BJ (cell line): ENCODE measurements at regions of chr7 and their contacts with region 1.

Region 1: GRCh38 chr7:128343554-128344430 is at the start of gene RBM28:
- DNase-seq: peak; percentile 44
- H3K4me3 ChIP-seq: peak within 1 kb of the TSS; percentile 94
- H3K27me3 ChIP-seq: peaks cover 8% of the 10 kb centered on the region
- CTCF ChIP-seq: no peak
- polyA plus RNA-seq, gene RBM28: 14.8 and 16.1 TPM in 2 replicates

Region 2: DNA sequence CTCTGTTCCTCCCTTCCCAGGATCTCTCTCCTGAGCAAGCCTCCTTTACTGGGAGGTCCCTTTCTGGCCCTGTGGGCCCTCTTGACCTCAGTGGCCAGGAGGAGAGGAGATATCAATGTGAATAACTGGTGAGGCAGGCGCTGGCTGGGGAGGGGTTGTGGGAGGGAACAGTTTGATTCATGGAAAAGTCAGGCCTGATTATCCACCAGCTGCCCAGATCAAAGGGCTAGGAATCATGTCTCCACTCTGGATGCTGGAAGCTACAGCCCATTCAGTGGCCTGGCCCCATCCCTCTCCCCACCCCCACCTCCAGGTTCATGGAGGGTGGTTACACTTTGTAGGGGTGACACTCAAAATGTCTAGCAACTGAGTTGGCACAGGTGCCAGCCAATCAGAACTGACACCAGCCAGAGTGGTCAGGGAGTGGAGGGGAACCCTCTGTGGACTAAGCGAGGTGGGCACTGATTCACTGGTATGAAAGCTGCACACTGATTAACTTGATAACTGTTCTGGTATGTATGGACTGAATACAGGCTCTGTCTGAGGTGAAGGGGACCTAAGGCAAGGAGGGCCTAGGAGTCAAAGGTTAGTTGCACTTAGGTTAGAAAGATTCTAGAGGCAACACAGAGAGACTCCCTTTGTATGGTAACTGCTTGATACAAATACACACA is 12.9 kb after region 1 on chr7:
- CTCF ChIA-PET with region 1: interaction called, 35 read pairs
- POLR2A ChIA-PET with region 1: no interaction called
- DNase-seq: no peak
- H3K4me3 ChIP-seq: no peak overlapping the region
- H3K27me3 ChIP-seq: peaks cover 47% of the 10 kb centered on the region
- CTCF ChIP-seq: no peak

Region 3: GRCh38 chr7:128373606-128374005 is 29.8 kb after region 1 on chr7:
- CTCF ChIA-PET with region 1: interaction called, 422 read pairs
- POLR2A ChIA-PET with region 1: no interaction called
- DNase-seq: no peak
- H3K4me3 ChIP-seq: no peak overlapping the region
- H3K27me3 ChIP-seq: peaks cover 3% of the 10 kb centered on the region
- CTCF ChIP-seq: no peak

Region 4: GRCh38 chr7:128398016-128398840 is 54.4 kb after region 1 on chr7:
- CTCF ChIA-PET with region 1: interaction called, 422 read pairs
- POLR2A ChIA-PET with region 1: no interaction called
- DNase-seq: no peak
- H3K4me3 ChIP-seq: no peak overlapping the region
- H3K27me3 ChIP-seq: no peaks in the 10 kb centered on the region
- CTCF ChIP-seq: peak; percentile 94

Region 5: DNA sequence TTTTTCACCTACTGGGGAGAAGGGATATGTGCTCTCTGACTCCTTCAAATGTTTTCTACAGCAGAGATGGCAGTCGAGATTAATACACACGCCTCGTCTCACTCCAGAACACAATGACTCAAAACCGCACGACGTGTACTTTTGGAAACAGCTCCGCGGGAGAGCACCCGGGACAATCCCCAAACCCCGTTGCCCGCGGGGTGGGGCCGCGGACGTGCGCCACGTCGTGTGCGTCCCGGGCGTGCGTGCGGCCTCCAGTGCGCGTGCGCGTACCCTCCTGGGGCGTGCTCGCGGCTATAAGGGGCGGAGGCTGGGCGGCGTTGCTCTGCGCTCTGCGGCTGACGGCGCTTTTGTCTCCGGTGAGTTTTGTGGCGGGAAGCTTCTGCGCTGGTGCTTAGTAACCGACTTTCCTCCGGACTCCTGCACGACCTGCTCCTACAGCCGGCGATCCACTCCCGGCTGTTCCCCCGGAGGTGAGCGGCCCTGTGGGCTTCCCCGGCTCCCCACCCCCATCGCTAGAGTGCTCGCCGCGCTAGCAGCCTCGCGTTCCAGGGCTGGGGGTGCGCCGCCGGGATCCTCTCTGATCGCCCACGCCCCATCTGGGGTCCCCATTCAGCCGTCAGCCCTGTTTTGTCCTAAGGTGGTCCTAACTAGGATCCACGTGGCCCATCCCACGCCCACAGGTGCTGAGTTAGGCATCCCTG is 111.9 kb after region 1 on chr7 and contains the start of gene HILPDA:
- CTCF ChIA-PET with region 1: interaction called, 10 read pairs
- POLR2A ChIA-PET with region 1: no interaction called
- DNase-seq: peak; percentile 76
- H3K4me3 ChIP-seq: peak within 1 kb of the TSS; percentile 88
- H3K27me3 ChIP-seq: no peaks in the 10 kb centered on the region
- CTCF ChIP-seq: 0 out of 2 replicates have a peak, but pooled peaks have one; percentile 11
- polyA plus RNA-seq, gene HILPDA: 16.0 and 21.5 TPM in 2 replicates